ENCODE measurements at regions of chr7 and their contacts with region 1.

Region 1: DNA sequence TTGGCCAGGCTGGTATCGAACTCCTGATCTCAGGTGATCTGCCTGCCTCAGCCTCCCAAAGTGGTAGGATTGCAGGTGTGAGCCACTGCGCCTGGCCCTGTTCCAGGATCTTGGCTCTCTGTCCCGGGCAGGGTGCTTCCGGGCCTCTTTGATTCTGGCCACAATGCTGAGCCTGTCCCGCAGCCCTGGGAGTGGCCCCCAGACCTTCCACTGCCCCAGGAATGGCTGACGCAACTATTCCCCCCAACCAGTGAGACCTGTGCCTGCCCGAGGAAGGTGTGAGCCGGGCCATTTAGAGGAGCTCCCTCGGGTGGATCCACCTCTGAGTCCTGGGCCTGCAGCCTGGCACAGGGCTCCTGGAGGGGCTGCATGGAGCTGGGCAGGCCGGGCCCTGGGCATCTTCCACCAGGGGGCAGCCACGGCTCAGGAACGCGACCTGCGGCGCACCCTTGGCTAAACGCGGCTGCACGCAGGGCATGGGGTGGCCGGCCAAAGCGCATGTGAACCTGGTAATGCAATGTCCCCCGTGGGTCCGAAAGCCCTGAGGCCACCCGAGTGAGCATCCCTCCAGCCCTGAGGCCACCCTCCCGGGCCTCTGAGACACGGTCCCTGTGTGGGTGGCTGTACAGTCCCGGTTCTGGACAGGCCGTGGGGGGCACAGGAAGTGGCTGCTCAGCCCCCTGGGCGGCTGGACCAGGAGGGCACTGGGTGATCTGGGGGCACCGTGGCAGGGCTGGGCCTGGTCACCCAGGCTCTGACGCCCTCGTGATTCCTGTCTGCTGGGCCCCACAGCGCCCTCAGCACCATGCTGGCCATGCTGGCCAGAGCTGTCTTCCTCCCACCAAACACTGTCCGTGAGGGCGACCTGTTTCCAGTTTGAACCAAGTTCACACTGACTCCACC is 24.8 kb downstream of the GRIFIN start:
- DNase-seq: peak; percentile 67 to 95
- H3K4me3 ChIP-seq: peak overlapping the region; percentile 39; the same call in 1 of the 2 replicates
- H3K27ac ChIP-seq: no peak overlapping the region
- H3K4me1 ChIP-seq: peaks cover 8% of the 10 kb centered on the region; the same call in 1 of the 2 replicates
- H3K27me3 ChIP-seq: no peaks in the 10 kb centered on the region
- CTCF ChIP-seq: peak; percentile 91

Region 2: GRCh38 chr7:2431260-2431867 is 20.1 kb before region 1 on chr7:
- CTCF ChIA-PET with region 1: no interaction called
- POLR2A ChIA-PET with region 1: no interaction called
- intact Hi-C with region 1: no loop called
- DNase-seq: no peak
- H3K4me3 ChIP-seq: no peak overlapping the region
- H3K27ac ChIP-seq: no peak overlapping the region
- H3K4me1 ChIP-seq: no peaks in the 10 kb centered on the region
- H3K27me3 ChIP-seq: no peaks in the 10 kb centered on the region
- CTCF ChIP-seq: peak; percentile 85

Region 3: GRCh38 chr7:2471396-2471795 is 20.0 kb after region 1 on chr7:
- CTCF ChIA-PET with region 1: interaction called, 25 read pairs
- POLR2A ChIA-PET with region 1: no interaction called
- intact Hi-C with region 1: loop called (anchors 1 kb)
- DNase-seq: no peak
- H3K4me3 ChIP-seq: no peak overlapping the region
- H3K27ac ChIP-seq: no peak overlapping the region
- H3K4me1 ChIP-seq: peaks cover 5% of the 10 kb centered on the region
- H3K27me3 ChIP-seq: no peaks in the 10 kb centered on the region
- CTCF ChIP-seq: no peak

Region 4: DNA sequence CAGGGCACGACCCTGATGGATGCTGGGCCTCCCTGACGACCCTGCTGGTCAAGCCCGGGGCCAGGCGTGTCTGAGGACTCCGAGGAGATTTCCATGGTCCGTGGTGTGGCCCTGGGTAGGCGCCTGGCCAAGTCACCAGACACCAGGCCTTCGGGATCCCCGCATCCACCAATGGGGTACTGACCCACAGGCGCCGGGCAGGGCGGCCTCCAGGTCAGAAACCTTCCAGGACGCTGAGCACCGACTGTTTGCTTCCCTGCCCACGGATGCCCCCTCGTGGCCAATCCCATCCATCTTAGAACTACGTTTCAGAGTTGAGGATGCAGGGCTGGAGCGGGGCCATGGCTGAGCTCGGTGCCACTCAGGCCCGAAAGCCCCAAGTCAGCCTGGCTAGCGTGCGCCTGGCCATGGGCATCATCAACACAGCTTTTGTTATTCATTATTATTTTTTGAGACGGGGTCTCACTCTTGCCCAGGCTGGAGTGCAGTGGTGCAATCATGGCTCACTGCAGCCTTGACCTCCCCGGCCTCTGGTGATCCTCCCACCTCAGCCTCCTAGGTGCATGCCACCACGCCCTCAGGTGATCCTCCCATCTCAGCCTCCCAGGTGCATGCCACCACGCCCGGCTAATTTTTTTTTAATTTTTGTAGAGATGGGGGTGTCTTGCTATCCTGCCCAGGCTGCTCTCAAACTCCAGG is 229.5 kb after region 1 on chr7:
- CTCF ChIA-PET with region 1: interaction called, 7 read pairs
- POLR2A ChIA-PET with region 1: no interaction called
- intact Hi-C with region 1: loop called (anchors 1 kb)
- DNase-seq: peak; percentile 47 to 83
- H3K4me3 ChIP-seq: no peak overlapping the region
- H3K27ac ChIP-seq: no peak overlapping the region
- H3K4me1 ChIP-seq: no peaks in the 10 kb centered on the region
- H3K27me3 ChIP-seq: 0 out of 2 replicates have a peak, but pooled peaks cover 9% of the 10 kb centered on the region
- CTCF ChIP-seq: peak; percentile 85

Region 5: DNA sequence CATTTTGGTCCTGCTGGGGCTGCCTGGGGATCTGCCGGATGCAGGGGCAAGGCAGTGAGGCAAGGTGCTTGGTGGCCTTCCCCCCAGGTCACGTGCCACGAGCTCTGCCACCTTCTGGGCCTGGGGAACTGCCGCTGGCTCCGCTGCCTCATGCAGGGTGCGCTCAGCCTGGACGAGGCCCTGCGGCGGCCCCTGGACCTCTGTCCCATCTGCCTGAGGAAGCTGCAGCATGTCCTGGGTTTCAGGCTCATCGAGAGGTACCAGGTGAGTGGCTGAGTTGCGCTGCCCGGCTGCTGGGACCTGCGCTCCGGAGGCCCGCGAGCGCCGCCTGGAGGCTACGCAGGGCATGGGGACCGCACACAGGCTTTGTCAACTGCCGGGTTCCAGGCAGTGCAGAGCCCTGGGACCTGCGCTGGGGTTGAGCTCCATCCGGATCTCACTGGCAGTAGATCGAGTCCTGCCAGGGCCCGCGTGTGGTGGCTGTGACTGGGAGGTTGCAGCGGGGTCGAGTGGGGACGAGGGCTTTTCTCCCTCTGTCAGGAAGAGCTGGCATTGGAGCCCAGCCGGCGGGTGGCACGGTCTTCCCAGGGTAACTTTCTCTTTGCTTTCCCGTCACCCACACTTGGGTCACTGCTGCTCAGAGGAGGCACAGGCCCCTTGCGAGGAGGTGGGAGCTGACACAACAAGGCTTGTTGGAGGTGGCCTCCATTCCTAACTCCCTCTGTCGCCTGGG is 258.3 kb after region 1 on chr7:
- CTCF ChIA-PET with region 1: interaction called, 11 read pairs
- POLR2A ChIA-PET with region 1: interaction called, 4 read pairs
- intact Hi-C with region 1: loop called (anchors 1 kb)
- DNase-seq: peak in 1 of 2 experiments; percentile 85
- H3K4me3 ChIP-seq: no peak overlapping the region
- H3K27ac ChIP-seq: no peak overlapping the region
- H3K4me1 ChIP-seq: no peaks in the 10 kb centered on the region
- H3K27me3 ChIP-seq: no peaks in the 10 kb centered on the region
- CTCF ChIP-seq: peak; percentile 66

Region 6: DNA sequence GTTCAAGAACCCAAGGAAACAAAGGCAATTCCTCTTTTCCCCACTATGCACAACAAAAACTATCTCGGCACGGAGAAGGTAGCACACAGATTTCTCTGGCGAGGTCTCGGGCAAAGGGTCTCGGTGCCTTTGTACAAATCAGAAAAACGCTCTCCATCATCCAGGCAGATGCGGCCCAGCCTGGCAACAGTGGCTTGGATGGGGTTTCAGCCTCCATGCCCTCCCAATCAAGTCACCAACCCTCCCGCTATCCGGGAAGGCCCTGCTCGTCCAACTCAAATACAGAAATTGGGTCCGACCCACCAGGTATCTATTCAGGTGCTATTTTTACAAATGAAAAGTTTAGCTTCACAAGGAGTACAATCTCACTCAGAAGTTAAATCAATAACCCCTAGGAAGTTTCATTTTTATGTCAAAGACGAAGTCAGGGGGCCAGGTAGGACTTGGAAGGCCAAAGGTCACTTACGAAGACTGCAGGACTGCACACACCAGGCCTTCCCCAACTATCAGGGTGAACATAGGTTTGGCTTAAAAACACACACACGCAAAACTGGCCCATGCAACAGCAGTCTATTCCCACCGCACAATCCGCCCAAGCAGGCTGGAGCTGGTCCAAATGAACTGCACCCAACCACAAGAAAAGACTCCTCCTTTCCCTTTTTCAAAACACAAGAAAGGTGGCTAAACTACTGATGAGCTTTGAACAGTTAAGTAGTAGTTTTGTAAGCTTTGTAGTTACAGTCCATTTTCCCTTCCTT is 349.7 kb after region 1 on chr7:
- CTCF ChIA-PET with region 1: no interaction called
- POLR2A ChIA-PET with region 1: interaction called, 17 read pairs
- intact Hi-C with region 1: no loop called
- DNase-seq: peak in 1 of 2 experiments; percentile 19
- H3K4me3 ChIP-seq: peak overlapping the region; percentile 55; the same call in 1 of the 2 replicates
- H3K27ac ChIP-seq: peak overlapping the region; percentile 94
- H3K4me1 ChIP-seq: peaks cover 58% of the 10 kb centered on the region
- H3K27me3 ChIP-seq: no peaks in the 10 kb centered on the region
- CTCF ChIP-seq: no peak

Region 7: GRCh38 chr7:2863461-2864066 is 412.1 kb after region 1 on chr7:
- CTCF ChIA-PET with region 1: no interaction called
- POLR2A ChIA-PET with region 1: no interaction called
- intact Hi-C with region 1: loop called (anchors 5 kb)
- DNase-seq: peak; percentile 85 to 96
- H3K4me3 ChIP-seq: peak overlapping the region; percentile 58
- H3K27ac ChIP-seq: peak overlapping the region; percentile 97
- H3K4me1 ChIP-seq: peaks cover 28% of the 10 kb centered on the region
- H3K27me3 ChIP-seq: no peaks in the 10 kb centered on the region
- CTCF ChIP-seq: no peak

Region 8: DNA sequence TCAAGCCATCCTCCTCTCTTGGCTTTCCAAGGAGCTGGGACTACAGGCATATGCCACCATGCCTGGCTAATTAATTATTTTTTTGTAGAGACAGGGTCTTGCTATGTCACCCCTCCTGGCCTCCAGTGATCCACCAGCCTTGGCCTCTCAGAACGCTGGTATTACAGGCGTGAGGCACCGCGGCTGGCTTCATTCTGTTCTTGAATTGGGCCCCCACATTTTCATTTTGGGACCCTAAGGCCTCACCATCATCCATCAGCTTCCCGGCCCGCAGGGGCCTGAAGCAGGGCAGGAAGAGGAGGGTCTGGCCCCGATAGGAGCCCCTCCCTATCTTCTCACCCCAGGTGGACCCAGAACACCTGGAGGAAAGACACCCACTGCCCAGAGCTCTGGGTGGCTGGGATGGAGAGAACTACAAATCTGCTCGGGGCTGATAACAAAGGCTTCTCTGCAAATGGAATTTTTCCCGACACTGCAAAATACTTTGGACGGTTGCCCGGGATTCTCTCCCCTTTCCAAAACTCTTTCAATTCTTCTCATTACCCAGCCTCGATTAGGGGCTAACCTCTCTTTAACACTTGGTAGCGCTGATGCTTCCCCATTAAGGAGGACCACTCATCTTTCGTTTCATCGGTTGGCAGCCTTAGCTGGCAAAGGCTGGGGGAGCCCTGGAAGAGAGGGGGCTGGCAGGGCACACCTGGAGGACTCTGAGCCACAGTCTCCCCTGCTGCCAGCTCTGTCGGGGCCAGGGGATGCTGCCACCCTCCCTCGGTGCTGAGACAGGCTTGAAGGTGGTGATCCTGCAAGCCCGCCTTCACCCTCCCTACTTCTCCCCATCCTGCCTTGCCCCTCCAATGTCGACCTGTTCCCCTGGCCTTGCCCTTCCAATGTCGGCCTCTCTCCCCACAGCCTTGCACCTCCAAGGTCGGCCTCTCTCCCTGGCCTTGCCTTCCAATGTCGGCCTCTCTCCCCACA is 473.7 kb after region 1 on chr7:
- CTCF ChIA-PET with region 1: interaction called, 10 read pairs
- POLR2A ChIA-PET with region 1: no interaction called
- intact Hi-C with region 1: no loop called
- DNase-seq: no peak
- H3K4me3 ChIP-seq: no peak overlapping the region
- H3K27ac ChIP-seq: no peak overlapping the region
- H3K4me1 ChIP-seq: no peaks in the 10 kb centered on the region
- H3K27me3 ChIP-seq: no peaks in the 10 kb centered on the region
- CTCF ChIP-seq: no peak

Measured in PC-9 (cell line).